Calu3 (cell line): ENCODE measurements at regions of chr12 and their contacts with region 1.

Region 1: DNA sequence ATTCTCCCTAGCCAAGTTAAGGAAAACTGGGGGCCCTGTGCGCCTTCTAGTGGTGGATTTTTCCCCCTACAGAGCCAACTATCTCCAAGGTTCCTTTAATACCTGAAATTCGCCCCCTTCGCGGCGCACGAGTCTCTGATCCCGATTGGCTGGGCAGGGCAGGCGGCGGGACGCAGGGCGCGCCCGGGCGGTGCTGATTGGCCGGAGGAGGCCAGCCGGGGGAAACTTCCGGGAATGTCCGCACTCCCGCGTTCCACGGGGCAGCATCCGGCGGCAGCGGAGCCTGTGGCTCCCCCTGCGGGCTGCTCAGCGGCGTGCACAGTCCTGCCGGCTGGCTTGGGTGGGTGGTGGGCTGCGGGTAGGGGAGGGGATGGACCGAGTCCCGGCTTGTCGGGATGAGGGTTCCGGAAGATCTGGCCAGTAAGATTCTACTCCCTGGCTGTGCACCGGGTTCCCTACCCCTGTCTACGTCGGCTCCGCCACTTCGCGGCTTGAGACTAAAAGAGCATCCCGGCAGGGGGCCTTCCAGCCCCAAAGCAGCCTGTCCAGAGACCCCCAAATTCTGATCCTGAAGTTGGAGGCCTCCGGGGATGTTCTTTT is at the start of gene NABP2:
- DNase-seq: peak; percentile 99
- H3K4me3 Mint-ChIP-seq: peak within 1 kb of the TSS; percentile 78
- H3K27ac Mint-ChIP-seq: peak within 1 kb of the TSS; percentile 73
- H3K4me1 Mint-ChIP-seq: peaks cover 17% of the 10 kb centered on the region
- H3K27me3 Mint-ChIP-seq: no peaks in the 10 kb centered on the region
- CTCF ChIP-seq: peak; percentile 95
- total RNA-seq, gene NABP2: 55.5 and 63.3 TPM in 2 replicates

Region 2: DNA sequence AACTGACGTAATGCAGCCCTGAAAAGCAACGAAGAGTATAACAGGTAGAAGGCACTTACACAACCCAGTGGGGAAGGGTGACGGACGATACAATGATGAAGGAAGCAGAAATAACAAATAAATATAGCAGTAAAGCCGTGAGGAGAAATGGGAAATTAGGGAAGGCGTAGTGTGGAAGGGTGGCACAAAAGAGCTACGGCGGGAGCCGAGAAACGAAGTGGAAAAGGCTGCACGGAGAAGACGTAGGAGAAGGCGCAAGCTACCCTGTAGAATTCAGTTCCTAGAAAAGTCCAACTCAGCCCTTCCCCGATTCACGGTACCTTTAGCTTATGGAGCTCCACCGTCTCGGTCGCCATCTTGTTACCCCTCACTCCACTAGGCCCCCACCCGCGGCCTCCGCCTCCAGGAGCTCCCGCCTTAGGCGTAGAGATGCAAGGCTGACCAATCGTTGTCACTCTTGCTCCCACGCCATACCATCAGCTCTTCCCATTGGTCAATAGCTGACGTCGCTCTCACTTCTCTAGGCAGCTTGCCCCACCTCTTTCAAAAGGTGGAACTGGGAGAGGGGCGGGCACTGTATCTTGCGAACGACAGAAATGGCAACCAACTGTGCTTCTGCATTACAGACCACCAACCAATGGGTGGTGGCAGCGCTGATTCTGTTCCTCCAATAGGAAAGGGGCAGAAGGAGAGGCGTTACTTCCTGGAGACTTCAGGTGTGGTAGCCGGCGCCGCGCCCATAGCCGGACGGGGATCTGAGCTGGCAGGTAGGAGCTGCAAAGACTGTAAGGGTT is 406.7 kb before region 1 on chr12 and contains the starts of genes ORMDL2 and SARNP:
- CTCF ChIA-PET with region 1: no interaction called
- intact Hi-C with region 1: no loop called
- DNase-seq: peak; percentile 97
- H3K4me3 Mint-ChIP-seq: no peak within 1 kb of the TSS
- H3K27ac Mint-ChIP-seq: no peak within 1 kb of the TSS
- H3K4me1 Mint-ChIP-seq: peaks cover 35% of the 10 kb centered on the region
- H3K27me3 Mint-ChIP-seq: no peaks in the 10 kb centered on the region
- CTCF ChIP-seq: no peak
- total RNA-seq, gene ORMDL2: 93.6 and 95.4 TPM in 2 replicates
- total RNA-seq, gene SARNP: 64.4 and 73.8 TPM in 2 replicates

Region 3: GRCh38 chr12:56178347-56178746 is 45.9 kb before region 1 on chr12:
- CTCF ChIA-PET with region 1: no interaction called
- intact Hi-C with region 1: no loop called
- DNase-seq: no peak
- H3K4me3 Mint-ChIP-seq: no peak overlapping the region
- H3K27ac Mint-ChIP-seq: no peak overlapping the region
- H3K4me1 Mint-ChIP-seq: no peaks in the 10 kb centered on the region
- H3K27me3 Mint-ChIP-seq: no peaks in the 10 kb centered on the region
- CTCF ChIP-seq: no peak

Region 4: GRCh38 chr12:56206457-56207166 is 17.6 kb before region 1 on chr12:
- CTCF ChIA-PET with region 1: interaction called, 28 read pairs
- intact Hi-C with region 1: no loop called
- DNase-seq: peak; percentile 58
- H3K4me3 Mint-ChIP-seq: no peak overlapping the region
- H3K27ac Mint-ChIP-seq: no peak overlapping the region
- H3K4me1 Mint-ChIP-seq: no peaks in the 10 kb centered on the region
- H3K27me3 Mint-ChIP-seq: no peaks in the 10 kb centered on the region
- CTCF ChIP-seq: peak; percentile 62

Region 5: DNA sequence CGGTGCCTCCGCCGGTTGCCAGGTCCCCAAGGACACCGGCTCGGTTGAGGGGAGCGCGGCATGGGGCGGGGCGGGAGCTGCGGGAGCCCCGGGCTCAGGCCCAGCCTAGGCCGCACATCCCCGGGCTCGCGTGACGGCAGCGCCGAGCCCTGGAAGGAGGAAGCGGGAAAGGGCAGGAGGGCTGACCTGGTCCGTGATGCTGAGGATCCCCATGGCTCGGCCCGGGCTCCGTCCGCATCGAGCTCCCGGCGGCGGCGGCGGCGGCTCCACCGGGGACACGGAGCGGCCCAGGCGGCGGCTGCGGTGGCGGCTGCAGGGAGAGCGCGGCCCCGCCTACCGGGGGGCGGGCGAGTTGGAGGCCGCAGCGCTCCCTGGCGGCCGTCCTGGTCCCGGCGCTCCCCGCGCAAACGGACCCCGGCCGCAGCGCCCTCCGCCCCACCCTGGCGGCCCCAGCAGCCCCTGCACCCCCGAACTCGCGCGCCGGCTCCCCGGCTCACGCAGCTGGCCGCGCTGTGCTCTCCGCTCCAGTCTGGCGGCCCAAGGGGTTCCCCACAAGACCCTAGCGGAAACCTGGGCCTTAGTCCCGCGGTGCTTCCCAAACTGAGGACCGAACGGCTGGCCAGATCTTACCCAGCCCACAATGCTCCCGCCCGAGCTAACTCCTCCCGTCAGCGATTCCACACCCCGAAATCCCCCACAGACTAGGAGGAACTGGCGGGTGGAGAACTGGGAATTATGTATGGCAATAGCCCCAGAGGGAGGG is 34.0 kb after region 1 on chr12 and contains the start of gene ANKRD52:
- CTCF ChIA-PET with region 1: interaction called, 10 read pairs
- intact Hi-C with region 1: no loop called
- DNase-seq: peak; percentile 91
- H3K4me3 Mint-ChIP-seq: peak within 1 kb of the TSS; percentile 83
- H3K27ac Mint-ChIP-seq: peak within 1 kb of the TSS; percentile 55
- H3K4me1 Mint-ChIP-seq: peaks cover 28% of the 10 kb centered on the region
- H3K27me3 Mint-ChIP-seq: no peaks in the 10 kb centered on the region
- CTCF ChIP-seq: peak; percentile 92
- total RNA-seq, gene ANKRD52: 45.3 and 50.6 TPM in 2 replicates

Region 6: GRCh38 chr12:56338308-56339157 is 114.3 kb after region 1 on chr12 and contains the start of gene IL23A:
- CTCF ChIA-PET with region 1: no interaction called
- intact Hi-C with region 1: no loop called
- DNase-seq: peak; percentile 66
- H3K4me3 Mint-ChIP-seq: no peak within 1 kb of the TSS
- H3K27ac Mint-ChIP-seq: peak within 1 kb of the TSS; percentile 42
- H3K4me1 Mint-ChIP-seq: peaks cover 17% of the 10 kb centered on the region
- H3K27me3 Mint-ChIP-seq: no peaks in the 10 kb centered on the region
- CTCF ChIP-seq: no peak
- total RNA-seq, gene IL23A: 1.8 and 2.9 TPM in 2 replicates